Gastrocnemius medialis (tissue), 4 donors: ENCODE measurements at regions of chr17 and their contacts with region 1.

Region 1: GRCh38 chr17:20095336-20096080 is 86.3 kb downstream of the SPECC1 start:
- DNase-seq: peak in 1 of 2 donors; percentile 53
- ATAC-seq: peak; percentile 33 to 49
- H3K4me3 ChIP-seq: no peak overlapping the region
- H3K27ac ChIP-seq: peak overlapping the region; percentile 56 to 86 (median 76)
- H3K4me1 ChIP-seq: peaks cover 0 to 33% of the 10 kb centered on the region in 2 donors
- H3K27me3 ChIP-seq: no peaks in the 10 kb centered on the region
- CTCF ChIP-seq: peak in 1 of 5 experiments; percentile 17
- POLR2A ChIP-seq: no peak

Region 2: GRCh38 chr17:20009302-20010098 is 86.0 kb before region 1 on chr17 and contains the start of gene SPECC1:
- in situ Hi-C with region 1: no loop called
- intact Hi-C with region 1: loop called (anchors 5 kb)
- DNase-seq: peak; percentile 44 to 63
- ATAC-seq: peak; percentile 14 to 37
- H3K4me3 ChIP-seq: peak within 1 kb of the TSS; percentile 56 to 70 (median 64)
- H3K27ac ChIP-seq: peak within 1 kb of the TSS; percentile 72 to 83 (median 76)
- H3K4me1 ChIP-seq: peaks cover 0 to 9% of the 10 kb centered on the region in 2 donors
- H3K27me3 ChIP-seq: peaks cover 8 to 41% (median 11%) of the 10 kb centered on the region in 3 donors
- CTCF ChIP-seq: peak; percentile 83 to 99 (median 96)
- POLR2A ChIP-seq: peak; percentile 32 to 55
- total RNA-seq, gene SPECC1: 6.1 to 17.9 (median 9.5) TPM

Region 3: DNA sequence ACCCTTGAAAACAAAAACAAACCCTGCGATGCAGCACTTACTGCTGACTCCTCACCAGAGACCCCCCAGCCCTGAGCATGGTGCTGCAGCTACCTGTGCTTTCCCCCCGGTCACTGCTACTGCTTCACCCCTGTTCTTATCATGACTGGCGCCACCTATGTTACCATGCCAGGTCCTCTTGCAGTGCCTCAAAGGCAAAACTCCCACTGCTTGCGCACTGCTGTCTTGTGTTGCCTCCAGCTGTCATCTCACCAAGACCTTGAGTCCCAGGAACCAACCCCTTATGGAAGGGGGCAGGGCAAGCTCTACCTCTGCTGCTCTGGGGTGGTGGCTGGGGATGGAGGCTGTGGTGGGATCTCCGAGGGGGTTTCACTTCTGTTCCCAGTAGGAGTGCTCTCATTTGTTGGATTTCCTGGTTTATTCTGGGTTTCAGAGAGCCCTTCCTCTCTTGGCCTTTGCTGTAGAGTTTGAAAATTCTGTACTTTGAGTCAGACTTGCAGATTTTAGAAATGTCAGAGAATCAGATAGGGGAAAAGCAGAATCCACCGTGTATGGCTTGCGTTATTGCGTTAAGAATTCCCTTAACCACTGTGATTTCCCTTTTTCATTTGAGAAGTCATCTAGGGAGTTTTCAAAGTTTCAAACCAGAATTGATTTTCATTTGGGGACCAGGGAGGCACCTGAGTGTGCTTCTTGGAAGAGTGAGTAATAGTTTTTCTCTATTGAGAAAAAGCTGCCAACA is 10.2 kb after region 1 on chr17:
- in situ Hi-C with region 1: no loop called
- intact Hi-C with region 1: loop called (anchors 1 kb)
- DNase-seq: no peak
- ATAC-seq: no peak
- H3K4me3 ChIP-seq: no peak overlapping the region
- H3K27ac ChIP-seq: no peak overlapping the region
- H3K4me1 ChIP-seq: no peaks in the 10 kb centered on the region
- H3K27me3 ChIP-seq: peaks cover 0 to 3% (median 0%) of the 10 kb centered on the region in 3 donors
- CTCF ChIP-seq: no peak
- POLR2A ChIP-seq: no peak

Region 4: DNA sequence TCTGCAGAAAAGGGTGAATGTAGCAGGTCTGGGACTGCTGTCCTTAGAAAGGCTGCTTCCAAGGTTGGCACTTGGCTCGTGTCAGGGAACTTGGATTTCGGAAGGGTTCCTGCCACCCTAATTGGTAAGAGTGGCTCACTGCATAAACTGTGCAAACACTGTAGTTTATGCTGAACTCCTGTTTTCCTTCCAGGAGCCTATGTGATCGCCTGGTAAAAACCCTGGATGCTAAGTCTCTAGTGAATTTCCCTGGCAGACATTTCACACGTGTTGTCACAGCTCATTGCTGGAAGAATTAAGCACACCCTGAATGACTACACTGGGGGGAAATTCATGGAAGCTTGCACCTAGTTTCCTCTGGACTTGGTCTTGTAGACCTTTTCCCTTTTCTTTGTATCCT is 53.7 kb after region 1 on chr17:
- in situ Hi-C with region 1: no loop called
- intact Hi-C with region 1: no loop called
- DNase-seq: no peak
- ATAC-seq: no peak
- H3K4me3 ChIP-seq: no peak overlapping the region
- H3K27ac ChIP-seq: no peak overlapping the region
- H3K4me1 ChIP-seq: no peaks in the 10 kb centered on the region
- H3K27me3 ChIP-seq: no peaks in the 10 kb centered on the region
- CTCF ChIP-seq: no peak
- POLR2A ChIP-seq: no peak

Region 5: DNA sequence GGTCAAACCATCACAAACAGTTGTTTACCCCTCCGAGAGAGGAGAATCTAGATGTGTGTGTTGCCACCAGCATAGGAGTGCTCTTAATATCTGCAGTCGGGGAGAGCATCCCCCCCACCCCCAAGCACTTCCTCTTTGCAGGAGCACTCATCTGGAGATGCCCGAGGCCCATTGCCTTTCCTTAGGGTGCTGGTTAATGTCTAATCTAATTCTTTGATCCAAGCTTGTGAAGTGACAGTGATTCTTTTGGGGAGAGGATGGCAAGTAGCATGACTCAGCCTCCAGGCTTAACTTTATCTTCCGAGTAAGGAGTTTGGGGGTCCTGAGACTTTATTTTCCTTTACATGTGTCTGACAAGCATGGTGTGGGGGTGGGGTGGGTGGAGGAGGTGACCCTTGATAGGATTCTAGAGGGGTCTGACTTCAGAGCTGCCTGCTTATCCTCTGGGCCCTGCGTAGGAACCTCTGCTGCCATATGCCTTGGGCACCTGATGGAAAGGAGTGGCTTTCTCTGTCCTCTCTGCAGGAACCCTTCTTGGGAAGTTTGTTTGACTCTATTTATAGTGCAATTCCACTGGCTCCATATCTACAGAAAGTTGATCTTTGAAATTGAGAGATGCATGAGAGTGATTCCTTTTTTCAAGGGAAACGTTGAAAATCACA is 120.8 kb after region 1 on chr17:
- in situ Hi-C with region 1: no loop called
- intact Hi-C with region 1: no loop called
- DNase-seq: no peak
- ATAC-seq: no peak
- H3K4me3 ChIP-seq: no peak overlapping the region
- H3K27ac ChIP-seq: no peak overlapping the region
- H3K4me1 ChIP-seq: no peaks in the 10 kb centered on the region
- H3K27me3 ChIP-seq: no peaks in the 10 kb centered on the region
- CTCF ChIP-seq: no peak
- POLR2A ChIP-seq: no peak